GM12878 (cell line): ENCODE measurements at regions of chr10 and their contacts with region 1.

Region 1: GRCh38 chr10:84537447-84537931 is 209.1 kb downstream of the CCSER2 start:
- DNase-seq: no peak
- ATAC-seq: peak; percentile 86
- H3K4me3 ChIP-seq: no peak overlapping the region
- H3K27ac ChIP-seq: no peak overlapping the region
- H3K4me1 ChIP-seq: no peaks in the 10 kb centered on the region
- H3K27me3 ChIP-seq: no peaks in the 10 kb centered on the region; a peak in 1 of 4 replicates
- CTCF ChIP-seq: peak; percentile 57 to 89 (median 66); a peak in 5 of 6 replicates
- EP300 ChIP-seq: no peak
- POLR2A ChIP-seq: no peak
- RAD21 ChIP-seq: peak; percentile 80

Region 2: DNA sequence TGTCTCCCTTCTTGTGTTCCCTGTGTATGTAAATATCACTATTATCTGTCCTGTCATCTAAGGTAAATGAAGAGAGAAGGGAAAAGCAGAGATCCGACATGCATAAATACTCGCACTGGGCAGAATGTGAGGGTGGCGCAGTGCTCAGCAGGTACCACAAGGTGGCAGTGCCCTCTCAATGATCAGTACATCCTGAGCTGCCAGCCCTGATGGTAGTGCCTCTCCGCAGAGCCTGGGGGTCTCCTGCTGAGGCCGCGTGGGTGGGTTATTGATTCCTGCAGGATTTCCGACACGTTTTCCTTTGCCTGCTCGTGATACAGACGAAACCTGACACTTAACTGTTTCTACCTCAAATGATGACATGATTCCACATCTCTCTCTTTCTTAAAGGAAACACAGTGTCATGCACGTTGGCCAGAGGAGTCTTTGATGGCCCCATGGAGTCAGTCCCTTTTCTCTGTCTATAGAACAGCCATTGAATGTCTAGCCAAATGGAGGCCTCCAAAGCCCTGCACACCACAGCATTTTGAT is 272.8 kb before region 1 on chr10:
- CTCF ChIA-PET with region 1: interaction called, 228 read pairs
- POLR2A ChIA-PET with region 1: no interaction called
- RAD21 ChIA-PET with region 1: interaction called, 74 read pairs
- SMC1A ChIA-PET with region 1: interaction called, 60 read pairs
- in situ Hi-C with region 1: loop called (anchors 5 kb)
- intact Hi-C with region 1: loop called (anchors 1 kb)
- DNase-seq: no peak
- ATAC-seq: peak; percentile 94
- H3K4me3 ChIP-seq: no peak overlapping the region
- H3K27ac ChIP-seq: no peak overlapping the region
- H3K4me1 ChIP-seq: no peaks in the 10 kb centered on the region
- H3K27me3 ChIP-seq: no peaks in the 10 kb centered on the region; a peak in 2 of 4 replicates
- CTCF ChIP-seq: peak; percentile 94 to 98 (median 97)
- EP300 ChIP-seq: no peak
- POLR2A ChIP-seq: no peak
- RAD21 ChIP-seq: peak; percentile 87

Region 3: GRCh38 chr10:84333864-84334451 is 203.5 kb before region 1 on chr10:
- CTCF ChIA-PET with region 1: interaction called, 14 read pairs
- POLR2A ChIA-PET with region 1: no interaction called
- RAD21 ChIA-PET with region 1: interaction called, 4 read pairs
- SMC1A ChIA-PET with region 1: interaction called, 3 read pairs
- in situ Hi-C with region 1: no loop called
- intact Hi-C with region 1: no loop called
- DNase-seq: no peak
- ATAC-seq: peak; percentile 64
- H3K4me3 ChIP-seq: no peak overlapping the region
- H3K27ac ChIP-seq: no peak overlapping the region
- H3K4me1 ChIP-seq: peaks cover 19% of the 10 kb centered on the region
- H3K27me3 ChIP-seq: no peaks in the 10 kb centered on the region
- CTCF ChIP-seq: no peak
- EP300 ChIP-seq: no peak
- POLR2A ChIP-seq: no peak
- RAD21 ChIP-seq: no peak

Region 4: DNA sequence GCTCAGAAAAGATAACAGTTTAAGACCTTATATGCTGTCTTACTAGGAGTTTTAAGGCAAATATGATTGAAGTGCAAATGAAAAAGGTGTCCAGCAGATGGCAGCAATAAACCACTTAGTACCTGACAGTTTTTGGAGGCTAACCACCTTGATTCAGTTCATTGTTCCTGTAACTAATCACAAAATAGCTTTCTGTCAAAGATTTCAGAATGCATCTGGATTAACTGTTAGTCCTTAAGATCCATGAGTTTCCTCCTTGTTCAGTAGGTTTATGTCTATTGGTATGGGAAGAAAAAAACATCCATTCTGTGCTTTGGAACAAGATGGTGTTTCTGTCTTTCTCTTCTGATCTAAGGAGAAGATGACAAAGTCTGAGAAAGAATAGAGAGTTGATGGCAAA is 162.5 kb before region 1 on chr10:
- CTCF ChIA-PET with region 1: interaction called, 129 read pairs
- POLR2A ChIA-PET with region 1: no interaction called
- RAD21 ChIA-PET with region 1: interaction called, 13 read pairs
- SMC1A ChIA-PET with region 1: interaction called, 28 read pairs
- in situ Hi-C with region 1: loop called (anchors 5 kb)
- intact Hi-C with region 1: loop called (anchors 1 kb)
- DNase-seq: peak; percentile 34
- ATAC-seq: peak; percentile 78
- H3K4me3 ChIP-seq: no peak overlapping the region
- H3K27ac ChIP-seq: no peak overlapping the region
- H3K4me1 ChIP-seq: no peaks in the 10 kb centered on the region
- H3K27me3 ChIP-seq: no peaks in the 10 kb centered on the region
- CTCF ChIP-seq: peak; percentile 58 to 69 (median 60)
- EP300 ChIP-seq: no peak
- POLR2A ChIP-seq: no peak
- RAD21 ChIP-seq: peak; percentile 77

Region 5: DNA sequence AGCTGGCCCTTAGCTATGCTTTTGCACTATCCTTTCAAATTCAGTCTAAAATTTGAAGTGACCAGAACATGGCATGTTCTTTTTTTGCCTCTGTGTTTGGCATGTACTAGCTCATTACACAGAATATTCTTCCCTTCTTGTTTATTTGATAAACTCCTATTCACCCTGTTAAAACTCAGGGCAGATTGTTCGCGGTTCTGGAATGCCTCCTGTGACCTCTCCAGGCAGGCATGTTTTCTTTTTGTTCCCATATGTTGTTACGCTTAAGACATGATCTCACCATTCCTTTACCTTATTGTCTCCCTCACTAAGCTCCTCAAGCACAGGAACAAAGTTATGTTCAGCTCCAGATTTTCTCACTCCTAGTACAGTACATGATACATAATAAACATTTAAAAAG is 27.4 kb before region 1 on chr10:
- CTCF ChIA-PET with region 1: interaction called, 7 read pairs
- POLR2A ChIA-PET with region 1: no interaction called
- RAD21 ChIA-PET with region 1: interaction called, 5 read pairs
- SMC1A ChIA-PET with region 1: interaction called, 13 read pairs
- in situ Hi-C with region 1: no loop called
- intact Hi-C with region 1: no loop called
- DNase-seq: no peak
- ATAC-seq: no peak
- H3K4me3 ChIP-seq: no peak overlapping the region
- H3K27ac ChIP-seq: no peak overlapping the region
- H3K4me1 ChIP-seq: no peaks in the 10 kb centered on the region
- H3K27me3 ChIP-seq: no peaks in the 10 kb centered on the region
- CTCF ChIP-seq: no peak
- EP300 ChIP-seq: no peak
- POLR2A ChIP-seq: no peak
- RAD21 ChIP-seq: no peak

Region 6: DNA sequence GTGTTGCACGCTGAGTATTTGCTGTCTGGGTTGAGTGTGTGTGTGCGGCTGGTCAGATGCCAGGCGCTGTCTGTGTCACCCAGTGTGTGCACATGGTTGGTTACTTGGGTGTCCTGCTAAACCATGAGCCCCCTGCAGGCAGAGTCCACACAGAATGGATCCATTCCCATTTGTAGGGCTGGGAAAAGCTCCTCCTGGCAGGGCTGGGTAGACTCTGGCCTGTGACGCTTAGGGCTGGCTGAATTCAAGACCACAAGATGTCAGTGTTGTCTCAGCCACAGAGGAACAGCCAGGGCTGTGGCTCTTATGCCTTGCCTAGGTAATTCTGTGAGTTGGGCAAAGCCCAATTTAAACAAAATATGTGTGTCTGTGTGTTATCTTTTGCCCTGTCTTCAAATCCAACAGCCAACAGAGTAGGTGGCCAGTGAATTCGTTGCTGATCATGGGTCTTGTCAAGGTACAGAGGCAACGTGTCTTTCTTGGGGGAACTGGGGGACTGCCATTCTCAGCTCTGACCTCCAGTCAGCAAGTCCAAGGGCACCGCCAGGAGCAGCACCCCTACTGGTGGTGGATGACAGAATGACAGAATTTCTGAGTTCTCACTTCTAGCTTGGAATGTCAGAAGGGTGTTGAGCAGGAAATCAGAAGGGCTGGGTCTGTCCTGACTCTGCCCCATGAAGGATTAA is 76.0 kb after region 1 on chr10:
- CTCF ChIA-PET with region 1: interaction called, 5 read pairs
- POLR2A ChIA-PET with region 1: no interaction called
- RAD21 ChIA-PET with region 1: no interaction called
- SMC1A ChIA-PET with region 1: no interaction called
- in situ Hi-C with region 1: no loop called
- intact Hi-C with region 1: loop called (anchors 1 kb)
- DNase-seq: no peak
- ATAC-seq: peak; percentile 89
- H3K4me3 ChIP-seq: no peak overlapping the region
- H3K27ac ChIP-seq: no peak overlapping the region
- H3K4me1 ChIP-seq: no peaks in the 10 kb centered on the region
- H3K27me3 ChIP-seq: no peaks in the 10 kb centered on the region
- CTCF ChIP-seq: peak; percentile 14 to 53 (median 19); a peak in 3 of 6 replicates
- EP300 ChIP-seq: no peak
- POLR2A ChIP-seq: no peak
- RAD21 ChIP-seq: peak; percentile 50